ENCODE measurements at regions of chr4 and their contacts with region 1.

Region 1: GRCh38 chr4:77156533-77156911 is 485 bp upstream of the CCNG2 start:
- DNase-seq: peak; percentile 97
- H3K4me3 Mint-ChIP-seq: peak overlapping the region; percentile 98
- H3K27ac Mint-ChIP-seq: peak overlapping the region; percentile 90
- H3K4me1 Mint-ChIP-seq: peaks cover 43% of the 10 kb centered on the region
- H3K27me3 Mint-ChIP-seq: no peaks in the 10 kb centered on the region

Region 2: DNA sequence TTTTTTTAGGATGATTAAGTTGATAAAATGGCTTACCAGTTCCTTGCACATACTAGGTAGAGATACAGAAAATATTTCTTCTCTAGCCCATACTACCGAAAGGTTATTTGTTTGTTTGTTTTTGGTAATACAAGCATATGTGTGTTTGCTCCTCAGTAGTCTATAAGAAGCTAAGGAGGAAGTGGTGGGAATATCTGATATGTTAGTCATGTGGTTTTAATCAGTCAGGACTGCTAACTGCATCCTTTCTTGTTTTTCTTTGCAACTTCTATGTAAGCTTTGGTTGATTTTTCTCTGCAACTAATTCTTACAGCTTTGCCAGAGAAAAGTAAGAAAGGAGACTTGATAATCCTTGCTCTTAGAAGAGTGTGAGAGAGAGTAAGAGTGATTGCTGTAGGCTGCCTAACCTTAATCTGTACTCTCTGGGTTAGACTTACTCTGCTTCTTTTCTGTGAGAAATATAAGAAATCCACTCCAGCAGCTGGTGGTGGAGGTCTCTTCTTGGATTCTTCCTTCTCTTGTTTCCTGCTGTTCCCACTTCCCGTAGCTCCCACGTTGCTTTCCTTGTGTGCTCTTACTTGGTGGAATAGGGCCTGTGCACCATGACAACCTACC is 178.7 kb before region 1 on chr4:
- CTCF ChIA-PET with region 1: no interaction called
- POLR2A ChIA-PET with region 1: no interaction called
- DNase-seq: no peak
- H3K4me3 Mint-ChIP-seq: no peak overlapping the region
- H3K27ac Mint-ChIP-seq: no peak overlapping the region
- H3K4me1 Mint-ChIP-seq: peaks cover 33% of the 10 kb centered on the region
- H3K27me3 Mint-ChIP-seq: peaks cover 17% of the 10 kb centered on the region

Region 3: GRCh38 chr4:77146186-77147078 is 10.1 kb before region 1 on chr4:
- CTCF ChIA-PET with region 1: interaction called, 4 read pairs
- POLR2A ChIA-PET with region 1: interaction called, 13 read pairs
- DNase-seq: no peak
- H3K4me3 Mint-ChIP-seq: no peak overlapping the region
- H3K27ac Mint-ChIP-seq: peak overlapping the region; percentile 69
- H3K4me1 Mint-ChIP-seq: peaks cover 22% of the 10 kb centered on the region
- H3K27me3 Mint-ChIP-seq: no peaks in the 10 kb centered on the region